ENCODE measurements at regions of chr12 and their contacts with region 1.

Region 1: GRCh38 chr12:54379401-54380201 is 4.9 kb downstream of the ZNF385A start:
- DNase-seq: peak; percentile 92
- ATAC-seq: peak; percentile 98
- H3K4me3 Mint-ChIP-seq: no peak overlapping the region
- H3K27ac Mint-ChIP-seq: peak overlapping the region; percentile 8
- H3K4me1 Mint-ChIP-seq: peaks cover 8% of the 10 kb centered on the region
- H3K27me3 Mint-ChIP-seq: no peaks in the 10 kb centered on the region

Region 2: GRCh38 chr12:54220092-54220557 is 159.5 kb before region 1 on chr12:
- CTCF ChIA-PET with region 1: interaction called, 37 read pairs
- DNase-seq: peak; percentile 81
- ATAC-seq: peak; percentile 56
- H3K4me3 Mint-ChIP-seq: no peak overlapping the region
- H3K27ac Mint-ChIP-seq: no peak overlapping the region
- H3K4me1 Mint-ChIP-seq: peaks cover 32% of the 10 kb centered on the region
- H3K27me3 Mint-ChIP-seq: peaks cover 7% of the 10 kb centered on the region

Region 3: GRCh38 chr12:54294152-54294952 is 85.2 kb before region 1 on chr12:
- CTCF ChIA-PET with region 1: interaction called, 68 read pairs
- DNase-seq: peak; percentile 79
- ATAC-seq: peak; percentile 66
- H3K4me3 Mint-ChIP-seq: no peak overlapping the region
- H3K27ac Mint-ChIP-seq: no peak overlapping the region
- H3K4me1 Mint-ChIP-seq: peaks cover 2% of the 10 kb centered on the region
- H3K27me3 Mint-ChIP-seq: peaks cover 24% of the 10 kb centered on the region

Region 4: GRCh38 chr12:54337280-54337842 is 42.2 kb before region 1 on chr12:
- CTCF ChIA-PET with region 1: interaction called, 23 read pairs
- DNase-seq: no peak
- ATAC-seq: no peak
- H3K4me3 Mint-ChIP-seq: no peak overlapping the region
- H3K27ac Mint-ChIP-seq: no peak overlapping the region
- H3K4me1 Mint-ChIP-seq: peaks cover 3% of the 10 kb centered on the region
- H3K27me3 Mint-ChIP-seq: no peaks in the 10 kb centered on the region

Region 5: GRCh38 chr12:54368709-54369583 is 10.7 kb before region 1 on chr12:
- CTCF ChIA-PET with region 1: interaction called, 35 read pairs
- DNase-seq: peak; percentile 93
- ATAC-seq: peak; percentile 92
- H3K4me3 Mint-ChIP-seq: no peak overlapping the region
- H3K27ac Mint-ChIP-seq: no peak overlapping the region
- H3K4me1 Mint-ChIP-seq: peaks cover 28% of the 10 kb centered on the region
- H3K27me3 Mint-ChIP-seq: peaks cover 18% of the 10 kb centered on the region

Region 6: GRCh38 chr12:54439521-54440255 is 60.1 kb after region 1 on chr12:
- CTCF ChIA-PET with region 1: interaction called, 35 read pairs
- DNase-seq: no peak
- ATAC-seq: peak; percentile 87
- H3K4me3 Mint-ChIP-seq: no peak overlapping the region
- H3K27ac Mint-ChIP-seq: no peak overlapping the region
- H3K4me1 Mint-ChIP-seq: peaks cover 2% of the 10 kb centered on the region
- H3K27me3 Mint-ChIP-seq: peaks cover 16% of the 10 kb centered on the region

Measured in activated CD8-positive, alpha-beta memory T cell treated with anti-CD3 and anti-CD28 coated beads, Interleukin-2, amount 10 ng/mL, durations not matched to agents 7 days and 5 days (primary cell).